ENCODE measurements at regions of chr2 and their contacts with region 1.

Region 1: DNA sequence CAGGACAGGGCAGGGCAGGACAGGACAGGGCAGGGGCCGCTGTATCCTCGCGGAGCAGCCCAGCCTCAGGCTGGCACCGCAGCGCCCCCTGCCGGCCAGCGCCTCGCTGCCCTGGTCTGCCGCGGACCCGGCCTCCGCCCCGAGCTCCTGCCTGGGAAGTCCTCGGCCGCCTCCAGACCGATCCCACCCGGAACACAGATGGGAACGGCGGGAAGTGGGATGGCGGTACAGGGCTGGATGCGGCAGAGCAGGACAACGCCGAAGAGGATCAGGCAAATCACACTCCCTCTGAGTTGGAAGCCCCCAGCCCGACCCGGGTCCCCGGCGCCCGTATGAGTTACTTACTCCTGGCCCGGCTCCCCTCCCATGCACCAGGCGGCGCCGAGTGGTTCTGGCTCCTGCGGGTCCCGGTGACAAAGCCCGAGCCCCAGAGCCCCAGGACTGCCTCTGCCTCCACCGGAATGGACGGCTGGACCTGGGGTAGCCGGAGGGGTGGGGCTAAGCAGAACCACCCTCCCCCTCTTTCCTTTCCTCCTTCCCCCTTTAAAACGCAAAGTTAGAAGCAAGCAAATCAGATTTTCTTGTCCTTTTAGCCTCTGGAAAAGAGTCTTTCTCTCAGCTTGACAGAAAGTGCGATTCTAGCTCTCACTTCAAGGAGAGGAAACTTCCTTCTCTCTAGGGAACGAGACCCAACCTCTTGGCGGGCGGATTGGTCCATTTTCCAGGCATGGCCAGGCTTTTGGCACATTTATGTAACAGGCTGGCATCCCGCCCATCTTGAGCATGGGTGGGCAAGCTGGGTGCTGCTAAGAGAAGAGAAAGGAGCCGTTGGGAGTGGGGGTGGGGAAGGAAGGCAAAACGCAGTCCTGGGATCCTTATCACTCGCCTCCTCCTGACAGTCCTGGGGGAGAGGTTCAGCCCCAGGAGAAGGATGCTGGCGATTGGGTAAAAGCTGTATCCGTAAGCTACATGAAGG is at the start of gene TP53I3:
- DNase-seq: peak; percentile 85
- ATAC-seq: peak; percentile 90
- H3K4me3 Mint-ChIP-seq: peak within 1 kb of the TSS; percentile 84
- H3K27ac Mint-ChIP-seq: peak within 1 kb of the TSS; percentile 79
- H3K4me1 Mint-ChIP-seq: peaks cover 12% of the 10 kb centered on the region
- H3K27me3 Mint-ChIP-seq: no peaks in the 10 kb centered on the region
- CTCF ChIP-seq: peak; percentile 97
- total RNA-seq, gene TP53I3: 1.8 to 2.6 TPM

Region 2: GRCh38 chr2:24046930-24047702 is 37.6 kb before region 1 on chr2 and contains the start of gene WDCP:
- CTCF ChIA-PET with region 1: interaction called, 19 read pairs
- POLR2A ChIA-PET with region 1: interaction called, 3 read pairs
- intact Hi-C with region 1: no loop called
- DNase-seq: peak; percentile 99
- ATAC-seq: peak; percentile 99
- H3K4me3 Mint-ChIP-seq: peak within 1 kb of the TSS; percentile 96
- H3K27ac Mint-ChIP-seq: peak within 1 kb of the TSS; percentile 90
- H3K4me1 Mint-ChIP-seq: peaks cover 25% of the 10 kb centered on the region
- H3K27me3 Mint-ChIP-seq: no peaks in the 10 kb centered on the region
- CTCF ChIP-seq: no peak
- total RNA-seq, gene WDCP: 20.2 to 23.0 TPM

Region 3: DNA sequence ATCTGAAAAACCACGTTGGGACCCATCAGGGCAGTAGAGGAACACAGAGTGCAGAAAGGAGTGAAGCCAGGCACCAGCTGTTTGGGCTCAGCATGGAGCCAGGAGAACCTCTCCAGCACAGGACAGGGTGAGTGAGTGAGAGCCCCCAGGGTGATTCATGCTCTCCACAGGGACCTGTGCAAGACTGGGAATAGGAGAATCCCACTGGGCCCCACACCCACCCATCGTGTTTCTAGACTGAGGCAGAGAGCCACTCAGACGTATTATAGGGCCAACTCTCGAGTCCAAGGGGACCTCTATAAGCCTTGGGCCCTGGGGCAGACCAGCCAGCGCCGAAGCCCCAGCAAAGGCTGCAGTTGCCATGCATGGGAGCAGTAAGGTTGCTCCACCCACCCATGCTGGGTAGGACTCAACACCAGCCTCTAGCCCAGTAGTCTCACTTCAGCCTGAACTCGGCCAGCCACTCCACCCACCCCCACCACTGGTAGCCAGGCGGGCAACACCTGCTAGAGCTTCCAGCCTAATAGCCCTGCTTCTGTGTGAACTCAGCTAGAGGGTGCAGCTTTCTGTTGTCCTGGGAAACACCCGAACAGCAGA is 19.5 kb after region 1 on chr2:
- CTCF ChIA-PET with region 1: interaction called, 10 read pairs
- POLR2A ChIA-PET with region 1: no interaction called
- intact Hi-C with region 1: no loop called
- DNase-seq: no peak
- ATAC-seq: no peak
- H3K4me3 Mint-ChIP-seq: no peak overlapping the region
- H3K27ac Mint-ChIP-seq: no peak overlapping the region
- H3K4me1 Mint-ChIP-seq: no peaks in the 10 kb centered on the region
- H3K27me3 Mint-ChIP-seq: no peaks in the 10 kb centered on the region
- CTCF ChIP-seq: no peak

Region 4: GRCh38 chr2:24123195-24123921 is 38.7 kb after region 1 on chr2 and contains the starts of genes FAM228B and PFN4:
- CTCF ChIA-PET with region 1: interaction called, 18 read pairs
- POLR2A ChIA-PET with region 1: interaction called, 5 read pairs
- intact Hi-C with region 1: no loop called
- DNase-seq: peak; percentile 76
- ATAC-seq: peak; percentile 92
- H3K4me3 Mint-ChIP-seq: peak within 1 kb of the TSS; percentile 78
- H3K27ac Mint-ChIP-seq: peak within 1 kb of the TSS; percentile 71
- H3K4me1 Mint-ChIP-seq: peaks cover 17% of the 10 kb centered on the region
- H3K27me3 Mint-ChIP-seq: no peaks in the 10 kb centered on the region
- CTCF ChIP-seq: no peak
- total RNA-seq, gene FAM228B: 4.5 to 5.7 TPM
- total RNA-seq, gene PFN4: not detected

Region 5: DNA sequence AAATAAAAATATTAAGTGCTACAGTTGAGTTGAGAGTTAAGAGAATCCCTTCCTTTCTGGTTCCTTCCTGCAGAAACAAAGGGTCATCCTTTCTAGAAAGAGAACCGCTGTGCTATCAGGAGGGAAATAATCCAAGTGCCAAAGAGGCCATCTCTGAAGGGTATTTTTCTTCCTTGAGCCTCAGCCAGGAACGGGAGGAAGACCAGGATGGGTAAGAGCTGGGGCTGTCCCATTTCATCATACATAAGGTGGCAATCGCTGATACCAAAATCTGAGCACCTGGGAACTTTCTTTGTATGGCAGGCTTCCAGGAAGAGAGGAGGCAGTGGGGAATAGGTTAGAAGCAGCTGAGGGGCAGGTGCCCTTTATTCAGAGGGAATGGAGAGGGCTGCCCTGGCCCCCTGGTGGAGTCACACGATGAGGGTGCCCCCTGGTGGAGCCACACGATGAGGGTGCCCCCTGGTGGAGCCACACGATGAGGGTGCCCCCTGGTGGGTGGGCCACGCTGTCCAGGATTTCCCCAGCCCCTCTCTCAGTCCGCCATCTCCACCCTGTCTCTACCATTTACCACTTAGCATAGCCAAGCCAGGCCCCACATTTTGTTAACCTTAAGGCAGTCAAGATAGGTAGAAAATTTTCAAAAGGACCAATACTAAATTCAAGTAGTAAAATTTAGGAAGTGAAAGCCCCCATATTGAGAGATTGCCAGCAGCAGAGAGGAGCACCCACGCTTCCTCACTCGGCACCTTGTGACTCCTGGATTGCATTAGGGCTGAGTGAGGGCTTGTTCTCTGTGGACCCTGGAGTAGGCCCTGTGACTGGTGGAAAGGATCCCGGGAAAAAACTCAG is 79.7 kb after region 1 on chr2:
- CTCF ChIA-PET with region 1: interaction called, 10 read pairs
- POLR2A ChIA-PET with region 1: no interaction called
- intact Hi-C with region 1: no loop called
- DNase-seq: peak; percentile 70
- ATAC-seq: peak; percentile 91
- H3K4me3 Mint-ChIP-seq: no peak overlapping the region
- H3K27ac Mint-ChIP-seq: no peak overlapping the region
- H3K4me1 Mint-ChIP-seq: no peaks in the 10 kb centered on the region
- H3K27me3 Mint-ChIP-seq: no peaks in the 10 kb centered on the region
- CTCF ChIP-seq: peak; percentile 91

Measured in activated CD8-positive, alpha-beta T cell treated with anti-CD3 and anti-CD28 coated beads for 36 hours (primary cell).